CD8-positive, alpha-beta memory T cell (primary cell): ENCODE measurements at regions of chr6 and their contacts with region 1.

Region 1: DNA sequence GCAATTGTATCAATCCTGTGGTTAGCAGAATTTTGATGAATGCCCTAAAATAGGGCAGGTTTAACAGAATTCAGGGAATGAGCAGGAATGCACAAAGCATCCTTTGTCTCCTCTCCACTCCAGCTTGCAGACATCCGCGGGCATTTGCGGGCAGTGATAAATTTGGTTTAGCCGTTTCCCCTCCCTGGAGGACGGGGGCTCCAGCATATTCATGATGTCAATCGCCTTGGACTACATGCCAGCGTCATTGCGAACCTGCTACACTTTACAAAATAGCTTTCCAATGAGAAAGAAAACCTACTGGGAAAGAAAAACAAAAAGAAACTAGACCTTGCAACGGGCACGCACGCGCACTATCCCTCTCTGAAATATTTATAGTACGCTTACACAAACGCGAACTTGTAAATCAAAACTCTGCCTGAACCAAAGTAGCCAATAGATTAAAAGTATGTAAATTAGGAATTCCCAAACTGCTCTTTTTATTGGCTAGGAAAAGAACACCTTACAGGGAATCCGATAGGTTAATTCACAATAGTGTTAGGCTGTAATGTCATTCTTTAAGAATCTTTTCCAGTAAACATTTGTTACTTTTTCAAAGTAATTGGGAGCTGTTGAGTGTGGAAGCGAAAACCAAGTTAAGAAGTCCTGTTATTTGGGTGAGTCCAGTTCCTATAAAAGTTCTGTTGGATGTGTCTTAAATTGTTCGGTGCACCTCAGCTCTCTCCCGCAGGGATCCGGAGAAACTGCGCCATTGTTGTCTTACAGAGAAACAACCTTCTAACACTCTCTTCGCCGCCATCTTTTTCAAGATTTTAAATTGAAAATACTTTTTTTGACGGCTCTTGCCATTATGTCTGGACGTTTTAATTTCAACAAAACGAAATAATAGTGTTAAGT is 136.7 kb downstream of the HFE start:
- DNase-seq: peak; percentile 57 to 83 (median 78)
- H3K4me3 ChIP-seq: peak overlapping the region; percentile 87
- H3K4me3 Mint-ChIP-seq: no peak overlapping the region
- H3K27ac ChIP-seq: peak overlapping the region; percentile 72
- H3K27ac Mint-ChIP-seq: no peak overlapping the region
- H3K4me1 ChIP-seq: peaks cover 17% of the 10 kb centered on the region
- H3K4me1 Mint-ChIP-seq: peaks cover under 1 to 7% (median 7%) of the 10 kb centered on the region in 3 donors
- H3K27me3 ChIP-seq: no peaks in the 10 kb centered on the region
- H3K27me3 Mint-ChIP-seq: no peaks in the 10 kb centered on the region

Region 2: DNA sequence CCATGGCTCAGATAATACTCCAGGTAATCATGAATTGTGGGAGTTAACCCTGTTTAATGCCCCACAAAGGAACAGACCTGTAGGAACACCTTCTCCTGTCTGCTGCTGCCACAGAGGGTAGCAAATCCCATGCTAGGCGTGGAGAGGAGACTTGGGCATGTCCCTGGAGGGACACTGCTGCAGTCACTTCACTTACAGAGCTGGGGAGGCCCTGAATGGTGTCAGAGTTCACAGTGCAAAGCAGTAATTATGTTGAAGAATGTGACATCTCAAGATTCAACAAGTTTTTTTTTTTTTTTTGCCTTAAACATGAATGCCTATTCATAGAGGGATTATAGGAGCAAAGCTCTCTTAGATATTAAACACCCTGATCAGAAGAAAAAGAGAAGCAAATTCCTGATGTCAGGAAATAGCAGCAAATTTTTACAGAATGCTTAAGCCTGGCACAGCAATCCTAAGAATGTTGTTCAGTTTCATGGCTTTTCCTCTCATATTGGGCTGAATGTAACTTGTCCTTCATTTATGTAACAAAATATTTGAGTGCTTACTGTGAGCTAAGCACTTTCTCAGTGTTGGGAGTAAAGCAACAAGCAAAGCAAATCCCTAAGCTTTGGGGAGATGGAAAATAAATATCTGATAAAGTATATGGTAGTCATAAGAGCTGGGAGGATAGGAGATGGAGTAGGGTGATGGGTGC is 899.7 kb before region 1 on chr6:
- CTCF ChIA-PET with region 1: no interaction called
- POLR2A ChIA-PET with region 1: no interaction called
- DNase-seq: no peak
- H3K4me3 ChIP-seq: no peak overlapping the region
- H3K4me3 Mint-ChIP-seq: no peak overlapping the region
- H3K27ac ChIP-seq: no peak overlapping the region
- H3K27ac Mint-ChIP-seq: no peak overlapping the region
- H3K4me1 ChIP-seq: no peaks in the 10 kb centered on the region
- H3K4me1 Mint-ChIP-seq: no peaks in the 10 kb centered on the region
- H3K27me3 ChIP-seq: no peaks in the 10 kb centered on the region
- H3K27me3 Mint-ChIP-seq: peaks cover 0 to 12% of the 10 kb centered on the region in 2 donors

Region 3: GRCh38 chr6:26006086-26006939 is 217.6 kb before region 1 on chr6:
- CTCF ChIA-PET with region 1: no interaction called
- POLR2A ChIA-PET with region 1: no interaction called
- DNase-seq: no peak
- H3K4me3 ChIP-seq: no peak overlapping the region
- H3K4me3 Mint-ChIP-seq: no peak overlapping the region
- H3K27ac ChIP-seq: no peak overlapping the region
- H3K27ac Mint-ChIP-seq: peak overlapping the region in 2 of 8 donors; percentile 78 to 81
- H3K4me1 ChIP-seq: no peaks in the 10 kb centered on the region
- H3K4me1 Mint-ChIP-seq: peaks cover 0 to 8% (median 0%) of the 10 kb centered on the region in 3 donors
- H3K27me3 ChIP-seq: no peaks in the 10 kb centered on the region
- H3K27me3 Mint-ChIP-seq: no peaks in the 10 kb centered on the region

Region 4: GRCh38 chr6:26056583-26057350 is 167.1 kb before region 1 on chr6:
- CTCF ChIA-PET with region 1: no interaction called
- POLR2A ChIA-PET with region 1: no interaction called
- DNase-seq: no peak
- H3K4me3 ChIP-seq: peak overlapping the region; percentile 92
- H3K4me3 Mint-ChIP-seq: peak overlapping the region; percentile 90 to 97 (median 94)
- H3K27ac ChIP-seq: peak overlapping the region; percentile 96
- H3K27ac Mint-ChIP-seq: peak overlapping the region; percentile 94 to 99 (median 97)
- H3K4me1 ChIP-seq: peaks cover 9% of the 10 kb centered on the region
- H3K4me1 Mint-ChIP-seq: peaks cover 17 to 30% (median 26%) of the 10 kb centered on the region in 3 donors
- H3K27me3 ChIP-seq: no peaks in the 10 kb centered on the region
- H3K27me3 Mint-ChIP-seq: peaks cover 0 to 5% of the 10 kb centered on the region in 2 donors

Region 5: GRCh38 chr6:26183581-26184366 is 40.1 kb before region 1 on chr6:
- CTCF ChIA-PET with region 1: interaction called, 11 read pairs
- POLR2A ChIA-PET with region 1: interaction called, 8 read pairs
- DNase-seq: peak; percentile 31 to 78 (median 72)
- H3K4me3 ChIP-seq: peak overlapping the region; percentile 81
- H3K4me3 Mint-ChIP-seq: peak overlapping the region; percentile 86 to 99 (median 97)
- H3K27ac ChIP-seq: peak overlapping the region; percentile 71
- H3K27ac Mint-ChIP-seq: peak overlapping the region; percentile 71 to 99 (median 96)
- H3K4me1 ChIP-seq: peaks cover 33% of the 10 kb centered on the region
- H3K4me1 Mint-ChIP-seq: peaks cover 41 to 53% (median 44%) of the 10 kb centered on the region in 3 donors
- H3K27me3 ChIP-seq: no peaks in the 10 kb centered on the region
- H3K27me3 Mint-ChIP-seq: no peaks in the 10 kb centered on the region